Endothelial cell of umbilical vein (primary cell): ENCODE measurements at regions of chr13 and their contacts with region 1.

Region 1: DNA sequence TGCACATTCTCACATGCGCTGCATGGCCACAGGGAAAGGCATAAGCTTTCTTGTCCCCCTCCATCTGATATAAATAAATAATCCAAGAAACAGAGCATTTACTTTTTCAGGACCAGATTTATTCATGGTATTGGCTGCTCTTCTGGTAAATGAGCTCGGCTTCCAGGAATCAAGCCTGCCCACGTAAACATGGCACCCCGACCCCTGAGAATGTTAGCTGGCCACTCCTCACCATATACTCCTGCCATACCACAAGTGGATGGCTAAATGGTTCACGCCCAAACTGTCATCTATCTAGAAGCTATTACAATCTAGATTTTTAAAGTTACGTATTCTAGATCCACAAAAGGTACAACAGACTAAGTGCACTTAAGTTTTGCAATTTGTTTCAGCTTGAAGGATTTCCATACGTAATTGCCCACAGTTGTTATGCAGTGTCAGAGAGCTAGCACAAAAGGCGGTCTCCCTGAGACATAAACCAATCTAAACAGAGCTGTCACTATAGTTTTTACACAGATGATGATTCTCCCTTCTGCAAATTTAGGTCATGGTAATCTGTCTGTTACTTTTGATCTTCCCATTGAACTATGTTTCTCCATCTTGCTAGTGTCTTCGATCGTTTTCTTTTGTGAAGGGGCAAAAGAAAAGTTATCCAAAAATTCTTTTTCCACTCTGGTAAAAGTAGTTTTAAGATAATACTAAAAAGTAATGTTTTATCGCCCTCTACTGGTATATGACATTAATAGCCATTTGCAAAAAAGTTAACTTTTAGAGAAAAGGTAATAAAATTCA is 16.2 kb upstream of the FOXO1 start:
- DNase-seq: peak; percentile 63
- H3K4me3 ChIP-seq: no peak overlapping the region
- H3K27ac ChIP-seq: peak overlapping the region; percentile 73
- H3K4me1 ChIP-seq: peaks cover 22% of the 10 kb centered on the region
- H3K27me3 ChIP-seq: no peaks in the 10 kb centered on the region
- CTCF ChIP-seq: peak; percentile 11 to 21
- POLR2A ChIP-seq: no peak

Region 2: GRCh38 chr13:39765801-39766463 is 916.7 kb before region 1 on chr13:
- CTCF ChIA-PET with region 1: interaction called, 11 read pairs
- POLR2A ChIA-PET with region 1: no interaction called
- dilution Hi-C with region 1: no loop called
- intact Hi-C with region 1: no loop called
- DNase-seq: peak; percentile 61
- H3K4me3 ChIP-seq: no peak overlapping the region
- H3K27ac ChIP-seq: no peak overlapping the region
- H3K4me1 ChIP-seq: no peaks in the 10 kb centered on the region
- H3K27me3 ChIP-seq: no peaks in the 10 kb centered on the region
- CTCF ChIP-seq: peak; percentile 32 to 45
- POLR2A ChIP-seq: no peak

Region 3: GRCh38 chr13:39876258-39876657 is 806.4 kb before region 1 on chr13:
- CTCF ChIA-PET with region 1: no interaction called
- POLR2A ChIA-PET with region 1: no interaction called
- dilution Hi-C with region 1: no loop called
- intact Hi-C with region 1: loop called (anchors 5 kb)
- DNase-seq: peak; percentile 90
- H3K4me3 ChIP-seq: no peak overlapping the region
- H3K27ac ChIP-seq: peak overlapping the region; percentile 98
- H3K4me1 ChIP-seq: peaks cover 67% of the 10 kb centered on the region
- H3K27me3 ChIP-seq: no peaks in the 10 kb centered on the region
- CTCF ChIP-seq: no peak
- POLR2A ChIP-seq: peak; percentile 25

Region 4: GRCh38 chr13:40069173-40070044 is 613.2 kb before region 1 on chr13:
- CTCF ChIA-PET with region 1: interaction called, 66 read pairs
- POLR2A ChIA-PET with region 1: no interaction called
- dilution Hi-C with region 1: no loop called
- intact Hi-C with region 1: loop called (anchors 1 kb)
- DNase-seq: peak; percentile 69
- H3K4me3 ChIP-seq: no peak overlapping the region
- H3K27ac ChIP-seq: no peak overlapping the region
- H3K4me1 ChIP-seq: peaks cover 5% of the 10 kb centered on the region
- H3K27me3 ChIP-seq: no peaks in the 10 kb centered on the region
- CTCF ChIP-seq: peak; percentile 69 to 82
- POLR2A ChIP-seq: no peak

Region 5: GRCh38 chr13:40401911-40402776 is 280.5 kb before region 1 on chr13:
- CTCF ChIA-PET with region 1: no interaction called
- POLR2A ChIA-PET with region 1: interaction called, 3 read pairs
- dilution Hi-C with region 1: no loop called
- intact Hi-C with region 1: loop called (anchors 5 kb)
- DNase-seq: peak; percentile 93
- H3K4me3 ChIP-seq: no peak overlapping the region
- H3K27ac ChIP-seq: peak overlapping the region; percentile 61
- H3K4me1 ChIP-seq: peaks cover 31% of the 10 kb centered on the region
- H3K27me3 ChIP-seq: no peaks in the 10 kb centered on the region
- CTCF ChIP-seq: no peak
- POLR2A ChIP-seq: no peak

Region 6: GRCh38 chr13:40629678-40630384 is 52.8 kb before region 1 on chr13:
- CTCF ChIA-PET with region 1: no interaction called
- POLR2A ChIA-PET with region 1: no interaction called
- dilution Hi-C with region 1: no loop called
- intact Hi-C with region 1: no loop called
- DNase-seq: no peak
- H3K4me3 ChIP-seq: no peak overlapping the region
- H3K27ac ChIP-seq: no peak overlapping the region
- H3K4me1 ChIP-seq: no peaks in the 10 kb centered on the region
- H3K27me3 ChIP-seq: no peaks in the 10 kb centered on the region
- CTCF ChIP-seq: no peak
- POLR2A ChIP-seq: no peak

Region 7: GRCh38 chr13:40671956-40672764 is 10.5 kb before region 1 on chr13:
- CTCF ChIA-PET with region 1: interaction called, 30 read pairs
- POLR2A ChIA-PET with region 1: interaction called, 4 read pairs
- dilution Hi-C with region 1: no loop called
- intact Hi-C with region 1: no loop called
- DNase-seq: peak; percentile 90
- H3K4me3 ChIP-seq: no peak overlapping the region
- H3K27ac ChIP-seq: peak overlapping the region; percentile 14
- H3K4me1 ChIP-seq: peaks cover 20% of the 10 kb centered on the region
- H3K27me3 ChIP-seq: no peaks in the 10 kb centered on the region
- CTCF ChIP-seq: no peak
- POLR2A ChIP-seq: no peak